Cardiac septum (tissue), 1 donor: ENCODE measurements at regions of chr5 and their contacts with region 1.

Region 1: GRCh38 chr5:159133041-159133741 is 33.5 kb upstream of the EBF1 start:
- DNase-seq: no peak

Region 2: DNA sequence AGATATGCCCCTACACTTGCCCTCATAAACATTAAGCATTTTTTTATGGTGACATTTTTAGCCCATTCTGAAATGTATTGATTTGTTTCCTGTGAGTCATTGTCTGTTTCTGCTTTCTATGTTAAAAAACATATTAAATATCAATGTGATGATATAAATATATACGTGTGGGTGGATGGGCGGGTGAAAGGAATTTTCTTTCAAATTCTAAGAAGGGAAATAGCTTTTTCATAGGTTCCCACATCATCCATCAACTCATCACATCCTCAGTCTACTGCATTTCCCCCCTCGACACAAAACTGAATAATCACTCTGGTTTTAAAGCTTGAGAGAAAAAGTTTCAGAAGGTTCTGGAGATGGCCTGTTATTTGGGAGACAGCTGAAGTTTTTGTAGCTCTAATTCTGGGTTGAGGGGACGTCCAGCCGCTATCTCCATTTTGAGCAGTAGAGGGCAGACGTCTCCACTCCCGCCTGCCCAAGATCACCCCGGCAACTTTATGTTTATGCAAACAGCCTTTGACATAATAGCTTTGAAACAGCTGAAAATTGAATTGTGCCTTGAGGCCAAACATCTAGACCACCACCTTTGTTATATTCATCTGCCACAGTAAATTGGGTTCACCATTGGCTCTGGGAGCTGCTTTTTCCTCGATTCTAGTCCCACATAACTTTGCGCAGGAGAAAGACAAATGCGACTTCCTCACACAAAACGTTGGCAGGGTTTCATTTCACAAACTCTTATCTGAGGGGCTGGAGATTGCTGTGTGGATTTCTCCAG is 1058.0 kb before region 1 on chr5:
- intact Hi-C with region 1: loop called (anchors 5 kb)
- DNase-seq: no peak

Region 3: DNA sequence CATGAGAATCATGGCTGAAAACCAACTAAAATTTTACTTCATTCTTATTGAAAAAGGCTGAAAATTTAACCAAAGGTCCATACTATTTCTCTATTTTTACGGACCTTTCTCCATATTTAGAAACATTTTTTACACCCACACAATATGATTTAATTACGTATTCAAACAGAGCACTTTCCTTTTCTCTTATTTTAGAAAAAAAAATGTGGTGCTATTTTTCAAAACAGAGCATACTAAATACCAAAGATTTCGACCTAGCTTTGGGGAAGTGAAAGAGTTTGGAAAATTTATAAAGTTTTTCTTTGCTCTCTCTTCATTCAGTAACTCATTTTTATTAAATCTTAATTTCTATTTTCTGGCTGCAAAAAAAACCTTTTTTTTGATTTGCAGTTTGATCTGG is 38.1 kb after region 1 on chr5:
- intact Hi-C with region 1: no loop called
- DNase-seq: no peak